ENCODE measurements at regions of chr9 and their contacts with region 1.

Region 1: GRCh38 chr9:37913480-37914153 is 9.7 kb upstream of the SLC25A51 start:
- DNase-seq: peak; percentile 79
- H3K4me3 ChIP-seq: no peak overlapping the region
- H3K27ac ChIP-seq: no peak overlapping the region
- H3K4me1 ChIP-seq: peaks cover 9% of the 10 kb centered on the region
- CTCF ChIP-seq: peak; percentile 95

Region 2: GRCh38 chr9:37753489-37754190 is 160.0 kb before region 1 on chr9 and contains the start of gene TRMT10B:
- CTCF ChIA-PET with region 1: no interaction called
- POLR2A ChIA-PET with region 1: no interaction called
- intact Hi-C with region 1: no loop called
- DNase-seq: no peak
- H3K4me3 ChIP-seq: no peak within 1 kb of the TSS
- H3K27ac ChIP-seq: no peak within 1 kb of the TSS
- H3K4me1 ChIP-seq: no peaks in the 10 kb centered on the region
- CTCF ChIP-seq: no peak
- total RNA-seq, gene TRMT10B: not detected in 2 replicates

Region 3: GRCh38 chr9:37812773-37813379 is 100.7 kb before region 1 on chr9:
- CTCF ChIA-PET with region 1: no interaction called
- POLR2A ChIA-PET with region 1: no interaction called
- intact Hi-C with region 1: no loop called
- DNase-seq: no peak
- H3K4me3 ChIP-seq: no peak overlapping the region
- H3K27ac ChIP-seq: no peak overlapping the region
- H3K4me1 ChIP-seq: no peaks in the 10 kb centered on the region
- CTCF ChIP-seq: no peak

Region 4: DNA sequence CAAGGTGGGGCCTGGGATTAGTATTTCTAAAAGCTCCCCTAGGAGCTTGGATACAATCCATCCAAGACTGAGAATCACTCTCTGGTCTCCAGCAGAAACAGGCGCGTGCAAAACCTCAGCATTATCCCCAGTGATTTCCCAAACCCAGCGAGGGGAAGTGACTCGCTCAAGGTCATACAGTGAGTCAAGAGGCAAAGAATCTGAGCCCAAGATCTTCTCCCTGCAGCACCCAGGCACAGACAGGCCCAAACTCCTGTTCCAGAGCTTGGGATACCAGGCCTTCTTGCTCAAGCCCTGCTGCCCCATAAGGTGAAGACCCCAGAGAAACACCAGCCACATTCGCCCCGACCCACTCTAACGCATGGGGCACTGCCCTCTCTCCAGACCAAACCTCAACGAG is 122.3 kb after region 1 on chr9:
- CTCF ChIA-PET with region 1: no interaction called
- POLR2A ChIA-PET with region 1: no interaction called
- intact Hi-C with region 1: no loop called
- DNase-seq: no peak
- H3K4me3 ChIP-seq: no peak overlapping the region
- H3K27ac ChIP-seq: no peak overlapping the region
- H3K4me1 ChIP-seq: no peaks in the 10 kb centered on the region
- CTCF ChIP-seq: no peak

Region 5: DNA sequence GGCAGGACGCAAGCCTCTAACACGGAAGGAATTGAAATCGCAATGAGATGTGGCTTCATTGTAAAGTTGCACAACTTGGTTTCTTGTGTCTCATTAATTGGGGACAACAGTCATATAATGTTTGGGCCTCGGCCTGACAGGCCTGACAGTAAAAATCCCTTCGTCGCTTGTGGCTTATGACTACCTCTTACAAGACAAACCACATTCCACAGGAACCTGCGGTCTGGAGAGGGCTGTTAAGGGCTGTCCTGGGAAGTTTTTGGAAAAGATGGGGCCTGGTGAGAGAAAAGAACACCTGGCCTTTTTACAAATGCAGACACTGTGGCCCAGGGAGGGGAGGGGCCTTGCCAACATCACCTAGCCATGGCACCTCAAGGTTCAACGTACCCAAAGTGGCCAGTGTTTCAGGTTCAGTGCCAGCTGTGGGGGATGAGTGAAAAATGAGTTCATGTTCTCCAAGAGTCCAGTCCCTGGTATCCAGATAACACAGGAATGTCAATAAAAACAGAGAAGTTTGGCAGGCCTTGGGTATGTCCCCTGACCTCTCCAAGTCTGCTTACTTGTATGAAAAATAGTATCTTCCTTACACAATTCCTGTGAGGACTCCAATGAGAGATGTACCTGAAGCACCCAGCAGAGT is 133.2 kb after region 1 on chr9:
- CTCF ChIA-PET with region 1: no interaction called
- POLR2A ChIA-PET with region 1: no interaction called
- intact Hi-C with region 1: no loop called
- DNase-seq: no peak
- H3K4me3 ChIP-seq: no peak overlapping the region
- H3K27ac ChIP-seq: no peak overlapping the region
- H3K4me1 ChIP-seq: no peaks in the 10 kb centered on the region
- CTCF ChIP-seq: no peak

Region 6: DNA sequence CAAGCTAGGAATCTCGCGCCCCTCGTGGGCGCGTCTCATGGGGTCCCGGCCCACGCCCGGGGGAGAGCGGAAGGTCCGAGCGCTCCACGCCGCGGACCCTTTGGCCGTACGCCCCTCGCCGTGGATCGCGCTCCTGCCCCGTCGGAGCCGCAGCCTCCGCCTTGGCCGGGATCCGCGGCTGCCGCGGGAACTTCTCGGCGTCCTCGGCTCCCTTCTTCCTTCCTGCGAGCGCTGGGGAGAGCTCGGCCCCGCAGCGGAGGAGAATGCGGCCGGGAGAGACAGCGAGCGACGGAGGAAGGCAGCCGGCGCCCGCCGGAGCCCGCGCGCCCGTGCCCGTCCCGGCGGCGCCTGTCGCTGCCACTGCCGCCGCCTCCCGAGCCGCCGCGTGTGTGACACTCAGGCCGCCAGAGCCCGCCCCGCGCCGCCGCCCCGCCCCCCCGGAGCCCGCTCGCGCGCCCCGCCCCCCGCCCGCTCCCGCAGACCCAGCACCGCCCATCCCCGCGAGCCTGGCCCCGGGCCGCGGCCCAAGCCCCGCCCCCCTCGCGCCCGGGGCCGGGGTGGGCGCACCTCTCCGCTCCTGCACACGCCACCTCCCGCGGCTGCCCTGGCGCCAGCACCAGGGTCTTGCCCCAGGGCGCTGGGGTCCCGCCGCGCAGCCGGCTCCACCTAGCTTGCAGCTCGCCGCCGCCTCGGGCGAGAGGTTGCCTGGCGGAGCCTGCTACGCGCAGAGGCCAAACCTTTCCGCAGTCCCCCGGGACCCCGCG is 155.4 kb after region 1 on chr9 and contains the start of gene SHB:
- CTCF ChIA-PET with region 1: no interaction called
- POLR2A ChIA-PET with region 1: no interaction called
- intact Hi-C with region 1: loop called (anchors 5 kb)
- DNase-seq: peak; percentile 62
- H3K4me3 ChIP-seq: peak within 1 kb of the TSS; percentile 73
- H3K27ac ChIP-seq: no peak within 1 kb of the TSS
- H3K4me1 ChIP-seq: peaks cover 5% of the 10 kb centered on the region
- CTCF ChIP-seq: peak; percentile 42; the same call in 1 of the 2 replicates
- total RNA-seq, gene SHB: 0.41 and 0.93 TPM in 2 replicates

Region 7: GRCh38 chr9:38088006-38088925 is 174.6 kb after region 1 on chr9:
- CTCF ChIA-PET with region 1: interaction called, 3 read pairs
- POLR2A ChIA-PET with region 1: no interaction called
- intact Hi-C with region 1: loop called (anchors 5 kb)
- DNase-seq: peak; percentile 54
- H3K4me3 ChIP-seq: no peak overlapping the region
- H3K27ac ChIP-seq: no peak overlapping the region
- H3K4me1 ChIP-seq: no peaks in the 10 kb centered on the region
- CTCF ChIP-seq: peak; percentile 96

Region 8: DNA sequence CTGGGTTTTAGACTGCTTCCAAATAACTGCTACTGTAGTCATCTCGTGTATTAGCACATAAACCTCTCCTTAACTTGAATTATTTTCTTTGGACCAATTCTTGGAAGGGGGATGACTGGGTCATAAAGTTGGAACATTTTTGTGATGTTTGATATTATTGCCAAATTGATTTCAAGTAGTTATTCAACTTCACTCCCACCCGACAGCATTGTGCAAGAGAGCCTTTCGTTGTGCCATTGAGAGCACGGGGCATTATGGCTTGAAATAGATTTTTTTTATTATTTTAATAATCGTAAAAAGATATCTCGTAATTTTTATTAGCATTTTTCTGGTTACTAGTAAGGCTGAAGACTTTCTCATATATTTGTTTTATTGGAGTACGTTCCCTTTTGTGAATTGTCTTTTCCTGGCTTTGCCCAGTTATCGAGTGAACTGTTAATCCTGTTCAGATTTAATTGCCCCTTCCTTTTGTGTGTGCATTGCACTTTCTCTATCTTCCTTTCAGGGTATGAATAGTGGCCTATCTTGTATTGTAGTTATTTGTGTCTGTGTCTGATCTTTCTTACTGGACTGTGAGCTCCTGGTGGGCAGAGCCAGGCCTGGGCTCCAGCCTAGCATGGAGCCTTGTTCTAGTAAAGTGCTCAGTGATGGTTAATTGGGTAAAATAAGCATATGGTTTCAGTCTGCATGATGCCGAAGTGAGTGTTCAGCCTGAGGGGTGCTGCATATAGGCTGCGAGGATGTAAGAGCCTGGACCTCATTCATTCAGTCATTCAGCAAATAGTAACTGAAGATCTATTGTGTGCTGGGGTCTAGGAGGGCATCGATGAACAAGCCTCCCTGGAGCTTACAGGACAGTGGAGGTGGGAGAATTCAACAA is 249.0 kb after region 1 on chr9:
- CTCF ChIA-PET with region 1: no interaction called
- POLR2A ChIA-PET with region 1: interaction called, 4 read pairs
- intact Hi-C with region 1: loop called (anchors 2 kb)
- DNase-seq: no peak
- H3K4me3 ChIP-seq: no peak overlapping the region
- H3K27ac ChIP-seq: no peak overlapping the region
- H3K4me1 ChIP-seq: no peaks in the 10 kb centered on the region
- CTCF ChIP-seq: no peak

Region 9: GRCh38 chr9:38263532-38263931 is 349.9 kb after region 1 on chr9:
- CTCF ChIA-PET with region 1: no interaction called
- POLR2A ChIA-PET with region 1: no interaction called
- intact Hi-C with region 1: loop called (anchors 10 kb)
- DNase-seq: peak; percentile 26
- H3K4me3 ChIP-seq: no peak overlapping the region
- H3K27ac ChIP-seq: no peak overlapping the region
- H3K4me1 ChIP-seq: no peaks in the 10 kb centered on the region
- CTCF ChIP-seq: peak; percentile 72

Region 10: GRCh38 chr9:38405785-38406184 is 492.2 kb after region 1 on chr9:
- CTCF ChIA-PET with region 1: no interaction called
- POLR2A ChIA-PET with region 1: no interaction called
- intact Hi-C with region 1: loop called (anchors 1 kb)
- DNase-seq: no peak
- H3K4me3 ChIP-seq: no peak overlapping the region
- H3K27ac ChIP-seq: no peak overlapping the region
- H3K4me1 ChIP-seq: no peaks in the 10 kb centered on the region
- CTCF ChIP-seq: no peak

Region 11: GRCh38 chr9:38432922-38433510 is 519.4 kb after region 1 on chr9:
- CTCF ChIA-PET with region 1: no interaction called
- POLR2A ChIA-PET with region 1: no interaction called
- intact Hi-C with region 1: loop called (anchors 1 kb)
- DNase-seq: peak; percentile 45
- H3K4me3 ChIP-seq: no peak overlapping the region
- H3K27ac ChIP-seq: no peak overlapping the region
- H3K4me1 ChIP-seq: no peaks in the 10 kb centered on the region
- CTCF ChIP-seq: peak; percentile 72